Breast epithelium (tissue), 4 donors: ENCODE measurements at regions of chr1 and their contacts with region 1.

Region 1: DNA sequence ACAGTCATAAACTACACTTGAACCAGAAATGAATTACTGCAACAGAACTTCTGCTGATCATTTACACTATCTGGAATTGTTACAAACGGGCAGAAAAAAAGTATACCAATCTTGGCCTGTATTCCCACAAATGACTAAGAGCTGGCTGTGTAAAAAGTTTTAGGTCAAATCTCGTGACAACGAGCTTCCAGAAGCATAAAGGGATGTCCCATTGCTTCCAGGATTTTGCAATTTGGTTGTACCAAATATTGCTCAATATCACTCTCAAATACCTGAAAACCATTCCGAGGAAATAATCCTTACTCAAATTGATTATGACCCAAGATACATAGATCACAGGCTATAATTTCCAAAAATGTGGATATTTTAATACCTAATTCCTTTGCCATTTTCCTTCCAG is 175.6 kb downstream of the TBX15 start:
- DNase-seq: no peak
- H3K4me3 ChIP-seq: no peak overlapping the region
- H3K27ac ChIP-seq: no peak overlapping the region
- H3K4me1 ChIP-seq: no peaks in the 10 kb centered on the region
- H3K27me3 ChIP-seq: no peaks in the 10 kb centered on the region
- CTCF ChIP-seq: no peak
- POLR2A ChIP-seq: no peak

Region 2: DNA sequence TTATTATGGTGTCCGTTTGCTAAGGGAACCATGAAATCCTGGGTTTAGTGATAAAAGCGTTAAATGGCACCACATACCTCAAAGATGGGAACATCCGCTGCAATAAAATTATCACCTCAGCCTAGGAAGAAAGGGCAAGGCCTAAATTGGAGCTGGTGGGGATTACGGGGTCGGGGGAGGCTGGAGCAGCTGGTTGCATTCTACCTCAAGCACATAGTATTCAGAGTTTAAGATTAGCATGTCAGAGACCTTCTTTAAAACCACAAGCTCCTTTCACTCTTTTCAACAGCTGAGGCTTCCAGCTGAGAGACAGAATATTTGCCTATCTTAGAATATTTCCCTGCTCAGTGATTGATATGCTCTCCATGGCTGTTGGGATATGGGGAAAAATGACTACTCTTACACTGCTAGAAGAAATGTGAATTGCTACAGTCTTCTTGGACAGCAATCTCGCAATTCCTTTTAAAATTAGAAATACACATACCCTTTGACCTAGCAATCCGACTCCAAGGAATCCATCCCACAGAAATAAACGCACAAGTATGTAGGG is 73.1 kb before region 1 on chr1:
- intact Hi-C with region 1: loop called (anchors 2 kb)
- DNase-seq: no peak
- H3K4me3 ChIP-seq: no peak overlapping the region
- H3K27ac ChIP-seq: no peak overlapping the region
- H3K4me1 ChIP-seq: no peaks in the 10 kb centered on the region
- H3K27me3 ChIP-seq: no peaks in the 10 kb centered on the region
- CTCF ChIP-seq: no peak
- POLR2A ChIP-seq: no peak

Region 3: GRCh38 chr1:118826669-118827068 is 14.1 kb after region 1 on chr1:
- intact Hi-C with region 1: no loop called
- DNase-seq: no peak
- H3K4me3 ChIP-seq: no peak overlapping the region
- H3K27ac ChIP-seq: no peak overlapping the region
- H3K4me1 ChIP-seq: no peaks in the 10 kb centered on the region
- H3K27me3 ChIP-seq: no peaks in the 10 kb centered on the region
- CTCF ChIP-seq: no peak
- POLR2A ChIP-seq: no peak